ENCODE measurements at regions of chr11 and their contacts with region 1.

Region 1: DNA sequence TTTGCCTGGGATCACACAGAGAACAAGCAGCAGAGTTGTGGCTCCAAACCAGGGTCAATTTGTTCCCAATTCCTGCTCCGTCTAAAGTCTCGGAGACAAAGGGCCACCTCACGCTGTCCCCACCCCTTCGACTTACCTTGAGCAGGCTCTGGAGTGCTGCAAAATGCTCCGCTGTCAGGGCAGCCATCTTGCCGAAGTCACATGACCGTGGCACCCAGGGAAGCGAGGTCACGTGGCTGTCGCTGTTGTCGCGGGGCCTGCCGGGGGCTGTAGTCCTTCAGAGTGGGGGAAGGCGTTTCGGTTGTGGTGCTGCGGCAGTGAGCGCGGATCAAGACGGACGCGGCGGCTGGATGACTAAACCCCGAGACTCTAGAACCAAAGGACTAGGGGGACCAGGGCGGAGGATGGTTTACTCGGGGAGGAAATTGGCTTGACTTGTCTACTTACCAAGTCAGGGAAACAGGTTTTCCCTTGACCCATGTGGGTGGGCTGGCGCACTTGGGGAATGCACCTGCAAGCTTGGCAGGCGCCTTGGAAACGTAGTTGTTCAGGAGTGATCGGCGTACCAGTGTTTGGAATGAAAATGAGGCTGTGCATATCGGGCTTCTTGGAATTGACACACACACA is at the start of gene COMMD9:
- DNase-seq: peak; percentile 98
- H3K4me3 Mint-ChIP-seq: peak within 1 kb of the TSS; percentile 89
- H3K27ac Mint-ChIP-seq: peak within 1 kb of the TSS; percentile 74
- H3K4me1 Mint-ChIP-seq: peaks cover 32% of the 10 kb centered on the region
- H3K27me3 Mint-ChIP-seq: no peaks in the 10 kb centered on the region
- total RNA-seq, gene COMMD9: 23.7 to 28.1 TPM

Region 2: GRCh38 chr11:35641171-35641897 is 648.0 kb before region 1 on chr11:
- CTCF ChIA-PET with region 1: no interaction called
- POLR2A ChIA-PET with region 1: no interaction called
- intact Hi-C with region 1: no loop called
- DNase-seq: no peak
- H3K4me3 Mint-ChIP-seq: no peak overlapping the region
- H3K27ac Mint-ChIP-seq: no peak overlapping the region
- H3K4me1 Mint-ChIP-seq: no peaks in the 10 kb centered on the region
- H3K27me3 Mint-ChIP-seq: peaks cover 18% of the 10 kb centered on the region

Region 3: DNA sequence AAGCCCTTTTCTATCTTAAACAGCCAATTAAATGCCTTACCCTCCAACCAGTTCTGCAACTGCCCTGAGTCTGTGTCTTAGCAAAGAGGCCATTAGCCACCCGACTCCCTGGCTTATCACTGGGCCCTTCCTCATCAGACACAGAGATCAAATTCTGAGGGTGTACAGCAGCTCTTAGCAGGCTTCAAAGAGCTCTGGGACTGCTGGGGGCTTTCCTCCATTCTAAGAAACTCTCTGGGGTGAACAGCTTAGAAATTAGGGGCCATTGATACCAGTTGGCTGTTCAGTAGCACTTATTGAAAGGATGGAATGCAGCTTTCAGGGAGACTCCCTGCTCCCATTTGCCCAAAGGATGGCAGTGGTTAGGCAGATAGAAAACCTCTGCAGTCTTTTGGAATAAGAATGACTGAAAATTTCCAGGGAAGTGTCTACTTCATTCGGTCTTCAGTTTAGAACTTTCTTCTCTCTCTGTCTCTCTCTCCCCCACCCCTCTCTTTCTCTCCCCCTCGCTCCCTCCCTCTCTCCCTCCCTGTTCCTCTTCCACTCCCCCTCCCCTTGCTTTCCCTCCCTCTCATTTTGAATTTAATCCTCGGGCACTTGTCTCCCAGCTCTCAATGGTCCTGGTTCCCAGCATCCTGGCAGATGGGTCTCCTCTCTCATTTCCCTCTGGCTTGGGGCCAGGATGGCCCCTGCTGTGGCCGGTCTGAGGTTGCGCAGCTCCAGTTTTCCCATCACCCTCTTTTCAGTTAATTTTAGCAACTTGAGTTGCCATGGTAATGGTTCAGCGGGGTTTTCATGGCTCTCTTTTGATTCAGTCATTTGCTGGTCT is 76.6 kb before region 1 on chr11:
- CTCF ChIA-PET with region 1: no interaction called
- POLR2A ChIA-PET with region 1: no interaction called
- intact Hi-C with region 1: no loop called
- DNase-seq: no peak
- H3K4me3 Mint-ChIP-seq: no peak overlapping the region
- H3K27ac Mint-ChIP-seq: no peak overlapping the region
- H3K4me1 Mint-ChIP-seq: no peaks in the 10 kb centered on the region
- H3K27me3 Mint-ChIP-seq: peaks cover 9% of the 10 kb centered on the region

Region 4: DNA sequence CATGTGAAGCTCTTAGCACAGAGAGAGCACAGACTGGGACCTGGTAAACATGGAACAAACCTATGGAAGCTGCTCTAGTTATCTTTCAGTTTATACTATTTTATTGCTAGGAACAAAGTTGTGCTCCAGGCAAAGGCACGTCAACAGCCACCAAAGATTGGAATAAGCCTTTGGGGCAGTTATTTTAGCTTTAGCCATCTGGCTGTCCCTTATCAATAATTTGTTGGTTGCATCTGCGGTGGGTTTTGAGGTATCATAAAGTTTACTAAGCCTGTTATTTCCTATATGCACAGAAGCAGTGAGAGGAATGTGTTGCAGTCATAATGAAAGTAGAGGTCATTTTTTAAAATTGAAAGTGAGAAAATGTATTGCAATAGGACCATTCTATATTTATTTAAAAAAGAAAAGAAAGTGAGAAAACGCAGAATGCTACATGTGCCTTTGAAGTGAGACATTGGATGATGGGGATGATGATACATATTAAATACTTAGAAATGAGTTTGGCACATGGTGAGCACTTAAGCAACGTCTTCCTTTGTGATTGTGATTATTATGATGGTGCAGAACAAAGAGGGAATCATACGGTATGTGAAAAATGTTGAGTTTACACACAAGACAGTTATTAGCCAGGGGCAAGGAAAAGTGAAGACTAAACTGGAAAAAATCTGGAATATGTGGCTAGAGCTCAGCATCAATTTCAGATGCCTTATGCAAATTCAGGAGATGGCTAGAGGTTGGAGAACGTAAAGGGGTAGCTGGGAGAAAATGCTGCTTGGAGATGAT is 65.1 kb after region 1 on chr11:
- CTCF ChIA-PET with region 1: interaction called, 6 read pairs
- POLR2A ChIA-PET with region 1: no interaction called
- intact Hi-C with region 1: loop called (anchors 1 kb)
- DNase-seq: no peak
- H3K4me3 Mint-ChIP-seq: peak overlapping the region; percentile 31
- H3K27ac Mint-ChIP-seq: peak overlapping the region; percentile 72
- H3K4me1 Mint-ChIP-seq: peaks cover 80% of the 10 kb centered on the region
- H3K27me3 Mint-ChIP-seq: peaks cover 7% of the 10 kb centered on the region

Region 5: DNA sequence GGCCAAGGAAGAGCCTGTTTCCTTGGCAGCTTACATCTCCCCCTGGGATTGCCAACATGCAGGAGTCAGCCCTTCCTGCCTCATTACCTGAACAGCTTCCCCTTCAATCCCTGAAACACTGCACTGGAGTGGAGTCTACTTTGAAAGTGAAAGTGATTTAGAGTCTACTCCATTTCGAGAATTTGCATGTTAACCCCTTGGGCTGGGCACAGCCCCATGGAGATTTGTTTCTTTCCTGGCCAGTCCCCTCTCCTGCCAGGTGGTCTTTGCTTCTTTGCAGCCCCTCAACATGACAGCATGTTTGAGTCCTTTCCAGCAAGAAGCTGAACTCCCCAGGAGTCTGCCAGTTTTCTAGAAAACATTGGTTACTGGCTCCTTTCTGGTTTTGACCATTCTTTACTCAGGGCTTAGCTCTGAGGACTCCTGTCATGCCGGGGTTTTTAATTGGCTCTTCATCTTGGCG is 160.8 kb after region 1 on chr11:
- CTCF ChIA-PET with region 1: interaction called, 10 read pairs
- POLR2A ChIA-PET with region 1: no interaction called
- intact Hi-C with region 1: no loop called
- DNase-seq: no peak
- H3K4me3 Mint-ChIP-seq: no peak overlapping the region
- H3K27ac Mint-ChIP-seq: no peak overlapping the region
- H3K4me1 Mint-ChIP-seq: peaks cover 46% of the 10 kb centered on the region
- H3K27me3 Mint-ChIP-seq: no peaks in the 10 kb centered on the region

Region 6: DNA sequence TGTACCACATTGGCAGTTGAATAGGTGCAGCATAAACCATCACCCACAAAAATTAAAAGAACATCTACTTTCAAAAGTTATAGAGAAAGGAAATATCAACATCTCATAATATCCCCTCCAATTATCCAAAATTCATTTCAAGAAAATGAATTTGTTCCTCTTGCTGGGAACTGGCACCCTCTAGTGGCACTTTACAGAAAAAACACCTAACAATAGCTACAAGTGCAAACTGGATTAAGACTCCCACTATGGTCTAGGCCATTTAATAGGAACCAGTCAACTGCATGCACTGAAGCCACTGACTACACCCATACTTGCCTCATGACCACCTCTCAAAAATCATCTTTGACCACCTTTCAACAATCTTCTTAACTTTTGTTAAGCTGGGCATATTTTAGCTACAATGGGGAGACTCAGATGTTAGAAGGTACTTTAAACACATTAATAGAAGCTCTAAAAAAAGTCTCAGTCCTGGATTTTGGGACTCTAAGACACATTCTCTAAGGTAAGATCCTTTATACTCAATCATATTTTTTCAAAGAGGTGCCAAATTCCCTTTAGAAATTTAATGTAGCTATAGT is 203.5 kb after region 1 on chr11:
- CTCF ChIA-PET with region 1: interaction called, 205 read pairs
- POLR2A ChIA-PET with region 1: interaction called, 4 read pairs
- intact Hi-C with region 1: loop called (anchors 1 kb)
- DNase-seq: no peak
- H3K4me3 Mint-ChIP-seq: no peak overlapping the region
- H3K27ac Mint-ChIP-seq: no peak overlapping the region
- H3K4me1 Mint-ChIP-seq: peaks cover 16% of the 10 kb centered on the region
- H3K27me3 Mint-ChIP-seq: no peaks in the 10 kb centered on the region

Region 7: GRCh38 chr11:36564376-36565030 is 275.2 kb after region 1 on chr11:
- CTCF ChIA-PET with region 1: interaction called, 20 read pairs
- POLR2A ChIA-PET with region 1: no interaction called
- intact Hi-C with region 1: loop called (anchors 1 kb)
- DNase-seq: peak; percentile 57
- H3K4me3 Mint-ChIP-seq: peak overlapping the region; percentile 12
- H3K27ac Mint-ChIP-seq: no peak overlapping the region
- H3K4me1 Mint-ChIP-seq: peaks cover 11% of the 10 kb centered on the region
- H3K27me3 Mint-ChIP-seq: peaks cover 25% of the 10 kb centered on the region

Region 8: GRCh38 chr11:36657610-36658267 is 368.4 kb after region 1 on chr11:
- CTCF ChIA-PET with region 1: no interaction called
- POLR2A ChIA-PET with region 1: no interaction called
- intact Hi-C with region 1: no loop called
- DNase-seq: peak; percentile 37
- H3K4me3 Mint-ChIP-seq: no peak overlapping the region
- H3K27ac Mint-ChIP-seq: no peak overlapping the region
- H3K4me1 Mint-ChIP-seq: no peaks in the 10 kb centered on the region
- H3K27me3 Mint-ChIP-seq: no peaks in the 10 kb centered on the region

Measured in activated CD4-positive, alpha-beta memory T cell treated with anti-CD3 and anti-CD28 coated beads for 36 hours (primary cell).